Colonic mucosa (tissue), 4 donors: ENCODE measurements at regions of chr20 and their contacts with region 1.

Region 1: DNA sequence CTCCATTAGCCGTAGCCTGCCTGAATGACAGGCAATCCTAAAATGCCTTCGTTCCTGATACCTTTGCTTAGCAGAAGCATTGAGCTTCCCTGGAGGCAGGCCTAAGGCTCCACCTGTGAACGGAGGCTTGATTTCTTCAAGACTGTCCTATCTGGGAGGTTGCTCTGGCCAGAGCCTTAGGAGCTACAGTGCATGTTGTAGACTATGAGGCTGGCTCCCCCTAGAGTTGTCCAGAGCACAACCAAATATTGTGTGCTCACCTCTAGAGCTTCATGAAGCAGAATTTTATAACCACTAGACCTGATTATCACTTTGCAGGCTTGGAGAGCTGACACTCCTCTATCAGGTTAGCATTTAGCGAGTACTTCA is 217.8 kb downstream of the MAFB start:
- DNase-seq: peak; percentile 29
- H3K4me3 ChIP-seq: no peak overlapping the region
- H3K27ac ChIP-seq: no peak overlapping the region
- H3K4me1 ChIP-seq: no peaks in the 10 kb centered on the region
- H3K27me3 ChIP-seq: no peaks in the 10 kb centered on the region
- CTCF ChIP-seq: no peak

Region 2: DNA sequence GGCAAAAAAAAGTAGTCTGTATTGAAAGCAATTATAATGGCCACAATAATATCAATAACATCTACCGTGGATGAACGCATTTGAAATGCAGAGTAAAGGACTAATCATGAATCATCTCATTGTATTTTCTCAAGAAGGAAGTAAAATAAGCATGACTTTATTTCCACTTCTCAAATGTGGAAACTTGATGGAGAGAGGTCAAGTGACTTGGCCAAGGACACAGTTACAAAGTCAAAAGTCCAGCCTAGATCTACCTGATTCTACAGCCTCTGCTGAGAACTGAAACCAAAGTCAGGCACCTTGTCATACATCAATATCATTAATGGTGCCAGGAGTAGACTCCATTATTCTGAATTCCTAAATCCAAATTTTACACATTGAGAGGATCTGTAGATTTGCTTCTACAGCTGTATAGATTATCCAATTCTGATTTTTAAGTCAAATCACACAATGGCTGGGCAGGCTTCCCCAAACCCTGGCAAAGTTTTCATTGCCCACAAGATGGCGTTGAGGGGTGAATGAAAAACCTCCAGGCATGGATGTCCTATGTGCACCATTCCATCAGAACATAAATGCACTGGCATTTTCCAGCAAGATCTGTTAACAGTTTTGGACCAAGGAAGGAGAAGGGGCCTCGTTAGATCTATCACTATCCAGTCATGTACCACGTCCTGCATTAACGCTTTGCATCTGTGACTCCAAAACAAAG is 205.3 kb before region 1 on chr20:
- intact Hi-C with region 1: loop called (anchors 5 kb)
- DNase-seq: peak; percentile 41
- H3K4me3 ChIP-seq: no peak overlapping the region
- H3K27ac ChIP-seq: no peak overlapping the region
- H3K4me1 ChIP-seq: no peaks in the 10 kb centered on the region
- H3K27me3 ChIP-seq: no peaks in the 10 kb centered on the region
- CTCF ChIP-seq: peak; percentile 39